IMR-90 (cell line): ENCODE measurements at regions of chr9 and their contacts with region 1.

Region 1: GRCh38 chr9:79571309-79572031 is at the start of gene TLE4:
- DNase-seq: peak; percentile 100
- ATAC-seq: peak; percentile 90
- H3K4me3 ChIP-seq: peak within 1 kb of the TSS; percentile 83
- H3K27ac ChIP-seq: peak within 1 kb of the TSS; percentile 77
- H3K4me1 ChIP-seq: peaks cover 2% of the 10 kb centered on the region; the same call in 1 of the 2 replicates
- H3K27me3 ChIP-seq: no peaks in the 10 kb centered on the region
- CTCF ChIP-seq: no peak
- POLR2A ChIP-seq: peak; percentile 98
- RAD21 ChIP-seq: 0 out of 2 replicates have a peak, but pooled peaks have one; percentile 1
- total RNA-seq, gene TLE4: 76.9 and 78.1 TPM in 2 replicates

Region 2: GRCh38 chr9:78592811-78593210 is 978.7 kb before region 1 on chr9:
- CTCF ChIA-PET with region 1: no interaction called
- POLR2A ChIA-PET with region 1: no interaction called
- dilution Hi-C with region 1: no loop called
- in situ Hi-C with region 1: loop called (anchors 25 kb)
- intact Hi-C with region 1: no loop called
- DNase-seq: peak; percentile 78
- ATAC-seq: peak; percentile 37; the same call in 1 of the 2 replicates
- H3K4me3 ChIP-seq: no peak overlapping the region
- H3K27ac ChIP-seq: 0 out of 2 replicates have a peak overlapping the region, but pooled peaks have one; percentile 27
- H3K4me1 ChIP-seq: peaks cover 11% of the 10 kb centered on the region
- H3K27me3 ChIP-seq: no peaks in the 10 kb centered on the region
- CTCF ChIP-seq: no peak
- POLR2A ChIP-seq: no peak
- RAD21 ChIP-seq: no peak

Region 3: GRCh38 chr9:79026316-79026715 is 545.2 kb before region 1 on chr9:
- CTCF ChIA-PET with region 1: no interaction called
- POLR2A ChIA-PET with region 1: no interaction called
- dilution Hi-C with region 1: no loop called
- in situ Hi-C with region 1: no loop called
- intact Hi-C with region 1: loop called (anchors 10 kb)
- DNase-seq: no peak
- ATAC-seq: no peak
- H3K4me3 ChIP-seq: no peak overlapping the region
- H3K27ac ChIP-seq: no peak overlapping the region
- H3K4me1 ChIP-seq: peaks cover 17% of the 10 kb centered on the region
- H3K27me3 ChIP-seq: no peaks in the 10 kb centered on the region
- CTCF ChIP-seq: no peak
- POLR2A ChIP-seq: no peak
- RAD21 ChIP-seq: no peak

Region 4: DNA sequence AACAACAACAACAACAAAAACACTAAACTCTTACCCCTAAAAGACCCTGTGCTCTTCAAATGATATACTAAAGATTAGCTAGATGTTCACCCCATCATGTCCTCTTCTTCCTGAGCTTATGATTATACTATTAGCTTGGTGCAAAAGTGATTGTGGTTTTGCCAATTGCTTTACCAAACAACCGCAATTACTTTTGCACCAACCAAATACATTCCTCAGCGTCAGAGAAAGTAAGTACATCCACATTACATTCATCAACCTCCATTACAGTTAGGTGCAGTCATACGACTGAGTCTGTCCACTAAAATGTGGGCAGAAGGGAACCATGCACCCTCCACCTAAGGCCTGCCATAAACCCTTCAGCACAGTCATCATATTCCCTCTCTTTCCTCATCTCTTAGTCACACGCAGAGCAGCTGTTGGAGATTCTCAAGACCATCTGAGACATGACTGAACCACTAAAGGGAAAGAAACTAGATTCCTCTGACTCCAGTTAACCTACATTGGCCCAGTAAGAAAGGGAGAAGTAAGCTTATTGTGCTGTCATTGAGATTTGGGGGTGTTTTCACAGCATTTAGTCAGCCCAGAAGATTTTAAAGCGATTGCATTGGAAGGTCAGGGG is 181.3 kb before region 1 on chr9:
- CTCF ChIA-PET with region 1: no interaction called
- POLR2A ChIA-PET with region 1: interaction called, 17 read pairs
- dilution Hi-C with region 1: no loop called
- in situ Hi-C with region 1: no loop called
- intact Hi-C with region 1: no loop called
- DNase-seq: peak; percentile 92
- ATAC-seq: peak; percentile 71
- H3K4me3 ChIP-seq: no peak overlapping the region
- H3K27ac ChIP-seq: no peak overlapping the region
- H3K4me1 ChIP-seq: no peaks in the 10 kb centered on the region
- H3K27me3 ChIP-seq: no peaks in the 10 kb centered on the region
- CTCF ChIP-seq: no peak
- POLR2A ChIP-seq: no peak
- RAD21 ChIP-seq: no peak

Region 5: GRCh38 chr9:79764381-79764780 is 192.9 kb after region 1 on chr9:
- CTCF ChIA-PET with region 1: no interaction called
- POLR2A ChIA-PET with region 1: no interaction called
- dilution Hi-C with region 1: no loop called
- in situ Hi-C with region 1: no loop called
- intact Hi-C with region 1: loop called (anchors 5 kb)
- DNase-seq: peak; percentile 98
- ATAC-seq: peak; percentile 88
- H3K4me3 ChIP-seq: no peak overlapping the region
- H3K27ac ChIP-seq: peak overlapping the region; percentile 35; the same call in 1 of the 2 replicates
- H3K4me1 ChIP-seq: peaks cover 11% of the 10 kb centered on the region
- H3K27me3 ChIP-seq: no peaks in the 10 kb centered on the region
- CTCF ChIP-seq: no peak
- POLR2A ChIP-seq: no peak
- RAD21 ChIP-seq: no peak; the same call in 1 of the 2 replicates

Region 6: GRCh38 chr9:80061940-80062339 is 490.5 kb after region 1 on chr9:
- CTCF ChIA-PET with region 1: no interaction called
- POLR2A ChIA-PET with region 1: no interaction called
- dilution Hi-C with region 1: no loop called
- in situ Hi-C with region 1: no loop called
- intact Hi-C with region 1: loop called (anchors 5 kb)
- DNase-seq: peak; percentile 97
- ATAC-seq: peak; percentile 93
- H3K4me3 ChIP-seq: no peak overlapping the region
- H3K27ac ChIP-seq: no peak overlapping the region
- H3K4me1 ChIP-seq: peaks cover 3% of the 10 kb centered on the region; the same call in 1 of the 2 replicates
- H3K27me3 ChIP-seq: no peaks in the 10 kb centered on the region
- CTCF ChIP-seq: no peak
- POLR2A ChIP-seq: no peak
- RAD21 ChIP-seq: no peak